ENCODE measurements at regions of chr7 and their contacts with region 1.

Region 1: GRCh38 chr7:106461993-106462859 is 177.4 kb upstream of the NAMPT start:
- DNase-seq: peak in 1 of 4 donors; percentile 51
- ATAC-seq: peak; percentile 81
- H3K4me3 ChIP-seq: no peak overlapping the region
- H3K27ac ChIP-seq: peak overlapping the region in 1 of 2 donors; percentile 45
- H3K4me1 ChIP-seq: peaks cover 0 to 15% of the 10 kb centered on the region in 2 donors
- H3K27me3 ChIP-seq: no peaks in the 10 kb centered on the region
- CTCF ChIP-seq: peak; percentile 46 to 75

Region 2: GRCh38 chr7:106176414-106177299 is 285.6 kb before region 1 on chr7:
- intact Hi-C with region 1: loop called (anchors 2 to 10 kb)
- DNase-seq: peak; percentile 65 to 92 (median 80)
- ATAC-seq: peak; percentile 93
- H3K4me3 ChIP-seq: no peak overlapping the region
- H3K27ac ChIP-seq: no peak overlapping the region
- H3K4me1 ChIP-seq: peaks cover 11 to 16% of the 10 kb centered on the region in 2 donors
- H3K27me3 ChIP-seq: peaks cover 0 to 7% of the 10 kb centered on the region in 2 donors
- CTCF ChIP-seq: peak; percentile 91 to 93

Region 3: DNA sequence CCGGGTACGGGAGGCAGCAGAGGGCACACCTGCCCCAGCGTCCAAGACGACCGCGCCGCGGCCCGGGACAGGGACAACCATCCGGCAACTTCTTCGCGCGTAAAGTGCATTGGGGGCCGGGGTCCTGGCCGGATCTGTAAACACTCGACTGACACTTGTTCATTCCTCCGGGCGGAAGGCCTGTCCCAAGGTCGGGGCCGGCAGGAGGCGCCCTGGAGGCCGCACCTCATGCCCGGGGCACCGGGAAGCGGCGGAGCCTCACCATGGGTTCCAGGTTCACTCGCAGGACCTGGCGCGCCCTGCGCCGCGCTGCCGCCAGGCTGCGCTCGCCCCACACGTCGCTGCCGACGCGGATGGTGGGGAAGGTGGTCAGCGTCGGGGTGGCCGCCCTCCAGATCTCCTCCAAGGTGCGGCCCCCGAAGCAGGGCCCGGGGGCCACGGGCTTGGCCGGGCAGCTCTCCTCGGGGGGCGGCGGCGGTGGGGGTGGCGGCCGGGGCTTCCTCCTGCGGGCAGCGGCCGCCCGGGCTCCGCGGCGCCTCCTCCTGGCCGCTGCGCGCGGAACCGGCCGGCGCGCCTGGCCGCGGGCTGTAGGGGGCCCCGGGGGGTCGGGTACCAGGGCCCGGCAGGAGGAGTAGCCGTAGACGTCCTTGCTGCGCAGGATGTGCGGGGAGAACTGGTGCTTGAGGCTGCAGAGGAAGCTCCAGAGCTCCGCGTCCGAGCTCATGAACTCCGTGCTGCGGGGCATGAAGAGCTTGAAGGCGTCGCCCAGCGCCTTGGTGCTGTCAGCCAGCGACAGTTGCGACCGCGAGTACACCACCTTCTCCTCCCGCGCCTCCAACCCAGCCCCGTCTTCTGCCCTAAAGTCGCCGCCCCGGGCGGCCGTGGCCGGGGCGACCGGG is 198.0 kb after region 1 on chr7:
- intact Hi-C with region 1: no loop called
- DNase-seq: peak; percentile 40 to 97 (median 81)
- ATAC-seq: peak; percentile 85
- H3K4me3 ChIP-seq: peak overlapping the region; percentile 77 to 82
- H3K27ac ChIP-seq: peak overlapping the region; percentile 97 to 98
- H3K4me1 ChIP-seq: peaks cover 0 to 30% of the 10 kb centered on the region in 2 donors
- H3K27me3 ChIP-seq: no peaks in the 10 kb centered on the region
- CTCF ChIP-seq: peak; percentile 66 to 84

Region 4: GRCh38 chr7:107570298-107570697 is 1108.1 kb after region 1 on chr7:
- intact Hi-C with region 1: no loop called
- DNase-seq: no peak
- ATAC-seq: no peak
- H3K4me3 ChIP-seq: no peak overlapping the region
- H3K27ac ChIP-seq: no peak overlapping the region
- H3K4me1 ChIP-seq: no peaks in the 10 kb centered on the region
- H3K27me3 ChIP-seq: no peaks in the 10 kb centered on the region
- CTCF ChIP-seq: no peak

Measured in left lung (tissue), 14 donors.